Activated T-helper 2 cell treated with anti-CD3 and anti-CD28 coated beads, Interferon-gamma antibody, Interleukin-2, Interleukin-4, amounts not matched to agents 10 μg/mL and 5 μg/mL and 100 μg/mL, durations not matched to agents 14 hours and 24 hours and 36 hours (primary cell): ENCODE measurements at regions of chr17 and their contacts with region 1.

Region 1: DNA sequence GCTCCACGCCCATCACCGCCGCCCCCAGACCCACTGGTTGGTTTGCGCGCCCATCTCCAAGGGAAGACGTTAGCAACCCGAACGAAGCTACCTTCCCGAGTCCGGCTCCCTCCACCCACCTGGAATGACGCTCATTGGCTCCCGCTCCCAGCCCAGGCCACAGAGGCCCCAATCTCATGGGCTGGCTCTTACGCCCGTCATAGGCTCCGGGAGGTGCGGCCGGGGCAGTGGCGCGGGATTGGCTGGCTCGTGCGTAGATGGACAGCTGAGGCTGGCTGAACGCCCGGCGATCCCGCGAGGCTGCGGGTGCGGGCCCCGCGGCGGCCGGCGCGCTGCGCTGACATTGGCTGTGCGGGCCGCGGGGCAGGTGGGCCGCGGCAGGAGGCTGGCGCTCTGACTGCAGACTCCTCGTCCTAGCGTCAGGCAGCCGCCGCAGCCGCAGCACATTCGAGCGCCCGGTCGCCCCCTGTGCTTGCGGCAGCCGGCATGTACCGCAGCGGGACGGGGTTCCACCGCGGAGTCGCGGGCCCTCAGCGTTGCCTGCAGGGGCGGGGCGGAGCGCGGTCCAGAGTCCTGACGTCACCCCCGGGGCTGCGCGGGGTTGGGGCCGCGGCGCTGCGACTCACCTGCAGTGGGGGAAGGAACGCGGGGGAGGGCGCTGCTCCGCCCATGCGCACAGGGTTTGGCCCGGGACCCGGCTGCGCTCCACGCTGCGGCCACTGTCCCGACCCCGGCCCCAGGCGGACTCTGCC is 453 bp upstream of the MYH10 start:
- DNase-seq: peak; percentile 90
- H3K4me3 Mint-ChIP-seq: peak overlapping the region; percentile 95
- H3K27ac Mint-ChIP-seq: no peak overlapping the region
- H3K4me1 Mint-ChIP-seq: peaks cover 11% of the 10 kb centered on the region
- H3K27me3 Mint-ChIP-seq: peaks cover 51% of the 10 kb centered on the region

Region 2: DNA sequence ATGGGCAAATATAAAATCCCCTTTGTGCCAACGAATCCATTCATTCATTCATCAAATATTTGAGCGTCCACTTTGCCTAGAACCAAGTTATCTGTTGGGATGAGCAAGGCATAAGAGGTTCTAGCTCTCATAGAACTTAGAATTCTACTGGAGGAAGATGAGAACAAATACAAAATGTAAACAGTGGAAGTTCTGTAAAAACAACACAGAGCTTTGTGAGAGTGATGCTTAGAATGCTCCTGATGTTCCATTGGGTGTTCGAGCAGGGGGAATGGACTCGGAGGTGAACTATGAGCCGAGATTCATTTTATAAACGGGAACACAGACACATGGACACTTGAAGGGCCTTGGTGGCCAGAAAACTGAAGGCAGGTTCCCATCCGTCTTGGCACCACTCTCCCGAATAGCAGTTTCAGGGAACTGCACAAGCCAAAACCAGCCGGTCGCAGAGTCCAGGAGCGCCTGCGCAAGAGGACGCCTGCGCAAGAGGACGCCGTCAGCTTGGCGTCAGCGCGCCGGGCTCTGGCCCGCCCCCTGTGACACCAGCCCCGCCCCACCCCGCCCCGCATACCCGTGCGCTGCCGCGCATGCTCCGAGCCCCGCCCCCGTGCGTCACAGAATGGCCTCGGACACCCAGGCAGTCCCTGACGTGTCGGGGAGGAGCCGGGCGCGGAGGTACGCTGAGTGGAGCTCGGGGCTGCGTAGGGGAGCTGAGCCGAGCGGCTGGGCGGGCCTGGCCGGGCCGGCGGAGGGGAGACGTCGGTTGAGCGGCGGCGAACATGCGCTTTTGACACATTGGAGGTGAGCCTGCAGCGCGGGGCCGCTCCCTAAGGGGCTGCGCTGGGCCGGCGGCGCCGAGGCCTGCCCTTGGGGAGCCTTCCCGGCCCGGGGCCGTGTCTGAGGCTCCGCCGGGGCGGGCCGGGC is 195.5 kb before region 1 on chr17 and contains the start of gene NDEL1:
- intact Hi-C with region 1: loop called (anchors 5 kb)
- DNase-seq: peak; percentile 98
- H3K4me3 Mint-ChIP-seq: peak within 1 kb of the TSS; percentile 98
- H3K27ac Mint-ChIP-seq: peak within 1 kb of the TSS; percentile 95
- H3K4me1 Mint-ChIP-seq: peaks cover 24% of the 10 kb centered on the region
- H3K27me3 Mint-ChIP-seq: no peaks in the 10 kb centered on the region
- total RNA-seq, gene NDEL1: 66.6 and 66.9 TPM in 2 replicates

Region 3: DNA sequence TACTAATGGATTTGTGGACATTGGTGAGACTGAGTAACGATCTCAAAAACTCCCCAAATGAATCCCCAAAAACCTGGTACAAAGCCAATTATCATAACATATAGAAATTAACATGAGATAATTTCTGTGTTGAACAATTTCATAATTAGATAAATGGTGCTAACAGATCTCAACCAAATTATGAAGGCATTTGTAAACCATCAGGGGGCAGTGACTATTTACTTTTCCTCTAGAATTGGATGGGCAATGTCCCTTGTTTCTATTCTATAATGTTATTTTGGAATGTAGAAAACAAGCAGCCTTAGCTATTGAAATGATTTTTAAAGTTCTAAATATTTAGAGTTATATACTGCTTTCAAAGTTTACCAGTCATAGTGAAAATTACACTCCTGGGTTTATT is 58.2 kb before region 1 on chr17:
- intact Hi-C with region 1: loop called (anchors 10 kb)
- DNase-seq: no peak
- H3K4me3 Mint-ChIP-seq: no peak overlapping the region
- H3K27ac Mint-ChIP-seq: no peak overlapping the region
- H3K4me1 Mint-ChIP-seq: peaks cover 1% of the 10 kb centered on the region
- H3K27me3 Mint-ChIP-seq: peaks cover 2% of the 10 kb centered on the region

Region 4: DNA sequence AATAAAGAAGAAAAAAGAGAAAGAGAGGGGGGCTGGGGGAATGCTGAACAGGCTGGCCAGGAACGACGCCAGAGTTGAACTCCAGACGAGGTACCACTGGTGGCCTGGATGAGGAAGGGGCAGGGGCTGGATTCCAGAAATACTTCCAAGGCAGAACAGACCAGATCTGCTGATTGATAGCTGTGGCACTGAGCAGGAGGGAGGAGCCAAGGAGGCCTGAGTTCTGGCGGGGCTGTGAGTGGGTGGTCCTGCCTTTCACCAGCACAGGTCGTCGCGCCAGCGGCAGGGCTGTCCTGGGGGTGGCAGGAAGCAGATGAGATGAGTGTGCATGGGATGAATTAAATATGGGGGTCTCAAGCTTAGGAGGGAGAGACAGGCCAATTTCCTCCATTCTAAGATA is 108.1 kb after region 1 on chr17:
- intact Hi-C with region 1: loop called (anchors 5 kb)
- DNase-seq: no peak
- H3K4me3 Mint-ChIP-seq: no peak overlapping the region
- H3K27ac Mint-ChIP-seq: no peak overlapping the region
- H3K4me1 Mint-ChIP-seq: peaks cover 9% of the 10 kb centered on the region
- H3K27me3 Mint-ChIP-seq: peaks cover 12% of the 10 kb centered on the region

Region 5: GRCh38 chr17:9002606-9003354 is 371.8 kb after region 1 on chr17:
- intact Hi-C with region 1: loop called (anchors 5 kb)
- DNase-seq: no peak
- H3K4me3 Mint-ChIP-seq: peak overlapping the region; percentile 47
- H3K27ac Mint-ChIP-seq: no peak overlapping the region
- H3K4me1 Mint-ChIP-seq: peaks cover 6% of the 10 kb centered on the region
- H3K27me3 Mint-ChIP-seq: peaks cover 68% of the 10 kb centered on the region